H1 (cell line): ENCODE measurements at regions of chr12 and their contacts with region 1.

Region 1: GRCh38 chr12:6965026-6965661 is 5.3 kb downstream of the PHB2 start:
- DNase-seq: peak in 1 of 2 experiments; percentile 88
- H3K4me3 ChIP-seq: peak overlapping the region in 2 of 4 experiments; percentile 23 to 79; a peak in 2 of 8 replicates
- H3K27ac ChIP-seq: peak overlapping the region; percentile 43; the same call in 1 of the 2 replicates
- H3K4me1 ChIP-seq: peaks cover 12 to 50% (median 32%) of the 10 kb centered on the region in 4 experiments
- H3K27me3 ChIP-seq: no peaks in the 10 kb centered on the region
- CTCF ChIP-seq: peak in 2 of 3 experiments; percentile 78 to 90; a peak in 3 of 4 replicates
- EP300 ChIP-seq: no peak
- POLR2A ChIP-seq: peak in 1 of 2 experiments; percentile 46; a peak in 2 of 3 replicates
- RAD21 ChIP-seq: peak; percentile 64 to 72

Region 2: DNA sequence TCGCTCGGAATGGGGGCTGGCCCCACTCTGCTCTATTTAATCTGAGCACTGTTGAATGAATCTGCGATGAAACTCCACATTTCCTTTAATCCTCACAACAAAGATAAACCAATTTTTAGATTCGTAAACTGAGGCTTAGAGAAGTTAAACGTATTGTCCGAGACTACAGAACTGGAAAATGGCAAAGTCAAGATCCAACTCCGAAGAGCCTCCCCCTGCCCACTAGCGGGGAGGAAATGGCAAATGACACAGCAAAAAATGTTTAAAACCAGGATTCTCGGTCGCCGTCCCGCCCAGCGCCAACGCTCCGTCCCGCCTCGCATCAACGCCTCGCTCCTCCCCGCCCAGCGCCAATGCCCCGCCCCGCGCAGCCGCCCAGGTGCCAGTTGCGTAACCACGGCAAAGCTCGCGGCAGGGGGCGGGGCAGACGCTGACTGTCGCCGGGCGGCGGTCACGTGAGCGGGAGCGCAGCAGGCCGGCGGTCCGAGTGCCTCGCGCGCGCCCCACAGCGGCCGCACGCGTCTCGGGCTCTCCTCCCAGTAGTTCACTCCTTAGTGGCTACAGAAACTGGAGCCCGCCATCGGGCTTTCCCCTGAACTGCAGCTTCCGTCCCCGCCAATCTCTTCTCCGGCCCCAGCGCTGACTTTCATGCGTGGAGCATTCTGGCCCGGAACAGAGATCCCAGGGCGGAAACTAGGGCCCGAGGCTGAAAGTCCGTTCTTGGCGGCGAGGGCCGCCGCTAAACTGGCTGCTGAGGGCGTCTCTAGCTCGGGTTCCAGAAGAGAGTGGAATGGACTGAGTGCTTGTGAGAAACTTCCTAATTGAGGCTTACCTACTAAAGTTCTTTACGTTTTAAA is 74.1 kb before region 1 on chr12:
- CTCF ChIA-PET with region 1: interaction called, 11 read pairs
- POLR2A ChIA-PET with region 1: interaction called, 4 read pairs
- DNase-seq: peak; percentile 92 to 99
- H3K4me3 ChIP-seq: peak overlapping the region; percentile 31 to 63 (median 56)
- H3K27ac ChIP-seq: peak overlapping the region; percentile 76
- H3K4me1 ChIP-seq: peaks cover 0 to 9% (median 2%) of the 10 kb centered on the region in 4 experiments; a peak in 4 of 7 replicates
- H3K27me3 ChIP-seq: no peaks in the 10 kb centered on the region
- CTCF ChIP-seq: peak; percentile 72 to 96 (median 78)
- EP300 ChIP-seq: peak in 1 of 2 experiments; percentile 61; a peak in 1 of 3 replicates
- POLR2A ChIP-seq: peak; percentile 71 to 84
- RAD21 ChIP-seq: peak; percentile 42 to 61

Region 3: GRCh38 chr12:6937481-6938297 is 27.5 kb before region 1 on chr12:
- CTCF ChIA-PET with region 1: interaction called, 277 read pairs
- POLR2A ChIA-PET with region 1: interaction called, 1,596 read pairs
- DNase-seq: peak in 1 of 2 experiments; percentile 93
- H3K4me3 ChIP-seq: peak overlapping the region; percentile 42 to 69 (median 58)
- H3K27ac ChIP-seq: peak overlapping the region; percentile 90
- H3K4me1 ChIP-seq: peaks cover 0 to 13% (median 5%) of the 10 kb centered on the region in 4 experiments; a peak in 5 of 7 replicates
- H3K27me3 ChIP-seq: no peaks in the 10 kb centered on the region
- CTCF ChIP-seq: peak in 2 of 3 experiments; percentile 90 to 99; a peak in 3 of 4 replicates
- EP300 ChIP-seq: peak; percentile 56 to 63; a peak in 1 of 3 replicates
- POLR2A ChIP-seq: peak in 1 of 2 experiments; percentile 93; a peak in 2 of 3 replicates
- RAD21 ChIP-seq: peak; percentile 51 to 53; a peak in 3 of 4 replicates

Region 4: DNA sequence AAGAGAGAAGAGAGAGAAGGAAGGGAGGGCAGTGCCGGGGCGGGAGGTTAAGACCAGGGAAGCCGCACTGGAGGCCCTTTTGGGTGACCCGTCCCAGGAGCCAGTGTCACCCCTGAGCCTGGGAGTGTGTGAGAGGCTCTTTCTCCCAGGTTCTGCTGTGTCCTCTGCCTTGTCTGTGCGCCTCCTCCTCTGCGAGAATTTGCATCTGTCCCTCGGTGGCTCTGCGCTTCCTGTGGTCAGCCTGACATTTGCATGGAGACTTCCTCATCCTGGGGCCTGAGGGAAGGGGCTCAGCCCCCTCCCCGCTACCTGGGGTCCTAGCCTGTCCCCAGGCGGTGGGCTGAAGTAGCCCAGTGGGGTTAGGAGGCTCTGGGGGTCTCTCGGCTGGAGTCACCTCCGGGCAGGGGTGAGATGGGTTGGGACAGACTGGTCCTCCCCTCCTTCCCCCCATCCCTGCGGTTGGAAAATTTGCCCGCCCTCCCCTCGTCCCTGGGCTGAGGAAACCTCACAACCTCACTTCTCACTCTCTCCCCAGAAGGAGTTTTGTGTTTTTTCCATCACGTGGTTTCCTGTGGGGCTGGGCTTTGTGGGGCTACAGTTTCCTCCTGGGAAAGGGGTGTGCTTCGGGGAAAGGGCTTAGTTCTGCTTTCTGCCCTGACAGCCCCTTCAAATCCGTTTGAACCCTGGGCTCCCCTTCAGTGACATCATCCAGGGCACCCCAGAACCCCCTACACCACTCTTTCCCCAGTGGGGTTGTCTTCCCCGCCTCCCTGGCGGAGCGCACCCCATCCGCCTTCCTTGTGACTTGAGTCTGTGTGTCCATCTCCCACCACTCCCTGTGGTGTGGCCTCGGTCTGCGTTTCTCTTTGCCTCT is 11.5 kb before region 1 on chr12:
- CTCF ChIA-PET with region 1: interaction called, 277 read pairs
- POLR2A ChIA-PET with region 1: interaction called, 1,596 read pairs
- DNase-seq: no peak
- H3K4me3 ChIP-seq: no peak overlapping the region
- H3K27ac ChIP-seq: no peak overlapping the region
- H3K4me1 ChIP-seq: peaks cover 0 to 14% (median 6%) of the 10 kb centered on the region in 4 experiments; a peak in 4 of 7 replicates
- H3K27me3 ChIP-seq: no peaks in the 10 kb centered on the region
- CTCF ChIP-seq: no peak
- EP300 ChIP-seq: no peak
- POLR2A ChIP-seq: no peak
- RAD21 ChIP-seq: no peak

Region 5: DNA sequence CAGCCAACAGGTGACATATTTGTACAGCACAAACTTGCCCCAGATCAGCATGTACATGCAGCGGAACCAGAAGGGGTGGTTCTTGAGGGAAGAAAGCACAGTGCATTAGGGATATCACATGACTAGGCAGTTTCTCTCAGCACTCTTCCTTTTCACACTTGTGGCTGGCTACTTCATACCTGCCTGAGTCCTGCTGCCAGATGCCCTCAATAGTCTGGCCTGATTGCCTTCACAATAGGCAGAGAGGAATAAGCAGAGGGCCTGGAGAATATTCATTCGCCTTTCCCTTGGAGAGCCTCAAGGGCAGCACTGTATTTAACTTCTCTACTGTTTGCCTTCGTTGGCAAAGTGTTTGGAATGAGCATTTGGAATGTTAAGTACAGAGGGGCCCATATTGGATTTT is 13.5 kb after region 1 on chr12:
- CTCF ChIA-PET with region 1: interaction called, 25 read pairs
- POLR2A ChIA-PET with region 1: interaction called, 1,596 read pairs
- DNase-seq: no peak
- H3K4me3 ChIP-seq: no peak overlapping the region
- H3K27ac ChIP-seq: no peak overlapping the region
- H3K4me1 ChIP-seq: peaks cover 0 to 6% (median under 1%) of the 10 kb centered on the region in 4 experiments; a peak in 2 of 7 replicates
- H3K27me3 ChIP-seq: no peaks in the 10 kb centered on the region
- CTCF ChIP-seq: no peak
- EP300 ChIP-seq: no peak
- POLR2A ChIP-seq: peak in 1 of 2 experiments; percentile 18; a peak in 2 of 3 replicates
- RAD21 ChIP-seq: no peak